PC-9 (cell line): ENCODE measurements at regions of chr22 and their contacts with region 1.

Region 1: GRCh38 chr22:43126480-43127165 is 16.1 kb downstream of the BIK start:
- DNase-seq: peak; percentile 89 to 93
- H3K4me3 ChIP-seq: peak overlapping the region; percentile 10; the same call in 1 of the 2 replicates
- H3K27ac ChIP-seq: peak overlapping the region; percentile 92
- H3K4me1 ChIP-seq: peaks cover 46% of the 10 kb centered on the region
- H3K27me3 ChIP-seq: no peaks in the 10 kb centered on the region
- CTCF ChIP-seq: no peak

Region 2: DNA sequence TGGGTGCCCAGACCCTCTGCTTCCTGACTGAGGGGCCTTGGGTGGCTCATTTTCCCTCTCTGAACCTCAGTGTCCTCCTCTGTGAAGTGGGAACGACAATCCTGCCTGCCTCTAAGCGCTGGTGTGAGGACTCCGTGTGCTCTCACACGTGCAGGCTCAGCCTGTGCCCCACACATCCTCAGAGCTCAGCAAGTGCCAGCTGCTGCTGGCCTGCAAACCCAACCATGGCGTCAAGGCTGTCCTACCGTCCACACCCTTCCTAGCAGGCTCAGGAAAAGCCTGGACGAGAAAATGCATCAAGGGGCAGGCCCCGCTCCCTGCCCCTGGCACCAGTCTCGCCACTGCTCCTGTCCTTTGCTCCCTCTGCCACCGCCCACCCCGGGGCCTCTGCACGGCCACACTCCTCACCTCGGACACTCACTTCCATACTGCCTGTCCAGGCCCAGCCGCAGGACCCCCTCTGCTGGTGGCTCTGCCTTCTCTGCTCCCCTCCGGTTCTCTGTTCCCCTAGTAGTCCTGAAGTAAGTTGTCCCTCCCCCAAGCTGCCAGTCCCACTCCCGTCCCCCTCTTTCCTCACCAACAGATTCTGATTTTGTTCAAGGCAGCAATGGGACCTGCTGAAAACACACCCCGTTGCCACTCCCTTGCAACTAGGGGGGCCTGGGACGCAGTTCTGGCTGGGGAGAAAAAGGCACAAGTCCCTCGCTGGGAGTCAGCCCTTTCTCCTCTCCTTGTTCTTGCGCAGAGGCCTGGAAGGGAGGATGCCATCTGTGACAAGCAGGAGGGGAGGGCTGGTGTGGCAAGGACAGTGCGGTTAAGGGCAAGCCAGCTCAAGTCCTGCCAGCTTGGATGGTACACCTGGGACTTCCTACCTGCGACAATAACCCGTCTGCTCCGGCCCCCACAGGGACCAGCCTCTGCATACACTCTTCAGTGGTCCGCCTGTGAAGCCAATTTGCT is 331.8 kb before region 1 on chr22:
- CTCF ChIA-PET with region 1: no interaction called
- POLR2A ChIA-PET with region 1: no interaction called
- intact Hi-C with region 1: no loop called
- DNase-seq: no peak
- H3K4me3 ChIP-seq: no peak overlapping the region
- H3K27ac ChIP-seq: no peak overlapping the region
- H3K4me1 ChIP-seq: no peaks in the 10 kb centered on the region
- H3K27me3 ChIP-seq: no peaks in the 10 kb centered on the region
- CTCF ChIP-seq: no peak

Region 3: GRCh38 chr22:42889304-42889703 is 237.3 kb before region 1 on chr22:
- CTCF ChIA-PET with region 1: no interaction called
- POLR2A ChIA-PET with region 1: no interaction called
- intact Hi-C with region 1: no loop called
- DNase-seq: no peak
- H3K4me3 ChIP-seq: no peak overlapping the region
- H3K27ac ChIP-seq: no peak overlapping the region
- H3K4me1 ChIP-seq: no peaks in the 10 kb centered on the region
- H3K27me3 ChIP-seq: no peaks in the 10 kb centered on the region
- CTCF ChIP-seq: no peak

Region 4: DNA sequence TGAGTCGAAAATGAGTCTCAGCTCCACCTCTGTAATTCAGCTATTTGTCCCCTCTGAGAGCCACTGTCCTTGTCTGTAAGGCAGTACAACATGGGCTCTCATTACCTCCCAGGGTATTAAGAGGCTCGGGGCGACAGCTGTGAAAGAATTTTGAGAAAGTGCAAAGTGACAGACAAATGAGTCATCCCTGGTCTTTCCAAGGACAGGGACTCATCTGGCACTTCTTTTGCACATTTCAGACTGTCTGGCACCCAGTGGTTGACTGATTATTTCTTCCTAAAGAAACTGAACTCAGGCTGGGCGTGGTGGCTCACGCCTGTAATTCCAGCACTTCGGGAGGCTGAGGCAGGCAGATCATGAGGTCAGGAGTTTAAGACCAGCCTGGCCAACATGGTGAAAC is 207.4 kb before region 1 on chr22:
- CTCF ChIA-PET with region 1: no interaction called
- POLR2A ChIA-PET with region 1: no interaction called
- intact Hi-C with region 1: loop called (anchors 5 kb)
- DNase-seq: peak; percentile 38 to 75
- H3K4me3 ChIP-seq: no peak overlapping the region
- H3K27ac ChIP-seq: peak overlapping the region; percentile 37
- H3K4me1 ChIP-seq: peaks cover 46% of the 10 kb centered on the region
- H3K27me3 ChIP-seq: no peaks in the 10 kb centered on the region
- CTCF ChIP-seq: no peak

Region 5: DNA sequence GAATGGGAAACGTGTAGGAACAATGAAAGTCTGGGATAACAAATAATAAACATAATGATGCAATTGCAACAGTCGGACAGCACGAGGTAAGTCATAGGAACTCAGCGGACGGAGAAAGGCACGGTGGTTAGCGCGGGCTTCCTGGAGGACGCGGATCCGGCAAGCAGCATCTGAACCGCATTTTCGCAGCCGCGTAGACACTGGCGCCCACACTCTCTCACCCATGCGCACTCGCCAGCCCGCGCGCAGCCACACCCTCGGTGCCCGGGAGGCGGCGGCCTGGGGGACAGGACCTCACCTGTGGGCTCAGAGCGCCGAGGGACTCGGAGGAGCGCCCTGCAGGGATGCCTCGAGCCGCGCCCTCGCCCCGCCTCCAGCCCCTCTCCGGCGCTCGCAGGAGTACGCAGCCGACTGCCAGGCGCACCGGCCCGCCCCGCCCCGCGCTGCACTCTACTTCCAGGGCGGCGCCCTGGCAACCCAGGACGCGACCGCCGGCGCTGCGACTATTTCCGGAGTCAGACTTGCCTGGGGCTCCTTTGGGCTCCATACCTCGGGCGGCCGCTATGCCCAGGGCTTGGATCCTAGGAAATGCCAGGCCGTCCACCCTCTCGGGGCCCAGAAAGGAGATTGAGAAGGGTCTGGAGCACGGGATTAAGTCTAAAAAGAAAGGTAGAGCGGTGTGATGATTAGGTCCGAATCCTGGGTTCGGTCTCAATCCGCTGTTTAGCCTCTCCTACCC is 37.5 kb before region 1 on chr22 and contains the start of gene TTLL1:
- CTCF ChIA-PET with region 1: no interaction called
- POLR2A ChIA-PET with region 1: interaction called, 11 read pairs
- intact Hi-C with region 1: loop called (anchors 2 kb)
- DNase-seq: peak; percentile 85 to 96
- H3K4me3 ChIP-seq: peak within 1 kb of the TSS; percentile 93
- H3K27ac ChIP-seq: peak within 1 kb of the TSS; percentile 70
- H3K4me1 ChIP-seq: peaks cover 7% of the 10 kb centered on the region
- H3K27me3 ChIP-seq: no peaks in the 10 kb centered on the region
- CTCF ChIP-seq: no peak; the same call in 1 of the 2 replicates
- total RNA-seq, gene TTLL1: 7.8 and 11.2 TPM in 2 replicates

Region 6: GRCh38 chr22:43099095-43099494 is 27.5 kb before region 1 on chr22:
- CTCF ChIA-PET with region 1: no interaction called
- POLR2A ChIA-PET with region 1: interaction called, 15 read pairs
- intact Hi-C with region 1: loop called (anchors 2 kb)
- DNase-seq: no peak
- H3K4me3 ChIP-seq: no peak overlapping the region
- H3K27ac ChIP-seq: no peak overlapping the region
- H3K4me1 ChIP-seq: peaks cover 28% of the 10 kb centered on the region
- H3K27me3 ChIP-seq: no peaks in the 10 kb centered on the region
- CTCF ChIP-seq: no peak

Region 7: DNA sequence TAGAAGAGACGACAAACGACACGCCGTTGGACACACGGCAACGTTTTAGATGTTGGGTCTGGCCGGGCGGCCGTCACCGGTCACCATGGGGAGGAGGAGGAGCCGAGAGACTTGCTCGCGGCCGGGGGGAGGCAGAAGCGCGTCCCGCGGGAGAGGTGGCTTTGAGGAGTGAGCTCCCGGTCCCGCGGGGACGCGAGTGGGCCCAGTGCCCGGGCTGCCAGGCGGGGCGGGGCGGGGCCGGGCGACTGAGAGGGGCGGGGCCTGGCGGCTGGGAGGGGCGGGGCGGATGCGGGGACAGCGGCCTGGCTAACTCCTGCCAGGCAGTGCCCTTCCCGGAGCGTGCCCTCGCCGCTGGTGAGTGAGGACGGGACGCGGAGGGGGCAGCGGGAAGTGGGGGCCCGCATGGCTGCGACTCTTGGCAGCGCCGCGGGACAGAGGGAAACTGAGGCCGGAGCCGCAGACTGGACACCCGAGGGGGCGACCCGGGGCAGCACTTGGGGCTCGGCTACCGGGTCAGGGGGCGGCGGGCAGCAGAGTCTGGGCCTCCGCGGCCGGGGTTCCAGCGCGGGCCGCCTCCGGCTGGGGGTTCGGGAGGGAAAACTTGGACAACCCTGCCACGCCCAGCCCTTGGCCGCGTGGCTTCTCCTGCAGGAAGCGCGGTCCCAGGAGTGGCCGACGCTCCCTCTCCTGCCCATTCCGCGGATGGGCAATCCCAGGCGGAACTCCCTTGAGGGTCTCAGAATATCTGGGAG is 24.8 kb after region 1 on chr22 and contains the start of gene TSPO:
- CTCF ChIA-PET with region 1: interaction called, 9 read pairs
- POLR2A ChIA-PET with region 1: interaction called, 20 read pairs
- intact Hi-C with region 1: no loop called
- DNase-seq: peak; percentile 34 to 60
- H3K4me3 ChIP-seq: peak within 1 kb of the TSS; percentile 88
- H3K27ac ChIP-seq: peak within 1 kb of the TSS; percentile 45; the same call in 1 of the 2 replicates
- H3K4me1 ChIP-seq: peaks cover 20% of the 10 kb centered on the region
- H3K27me3 ChIP-seq: no peaks in the 10 kb centered on the region
- CTCF ChIP-seq: no peak
- total RNA-seq, gene TSPO: 243 and 308 TPM in 2 replicates

Region 8: GRCh38 chr22:43222262-43222661 is 95.6 kb after region 1 on chr22:
- CTCF ChIA-PET with region 1: no interaction called
- POLR2A ChIA-PET with region 1: interaction called, 19 read pairs
- intact Hi-C with region 1: no loop called
- DNase-seq: peak in 1 of 2 experiments; percentile 34
- H3K4me3 ChIP-seq: no peak overlapping the region
- H3K27ac ChIP-seq: no peak overlapping the region
- H3K4me1 ChIP-seq: no peaks in the 10 kb centered on the region
- H3K27me3 ChIP-seq: peaks cover 31% of the 10 kb centered on the region; the same call in 1 of the 2 replicates
- CTCF ChIP-seq: no peak

Region 9: GRCh38 chr22:44550711-44551491 is 1424.3 kb after region 1 on chr22:
- CTCF ChIA-PET with region 1: no interaction called
- POLR2A ChIA-PET with region 1: interaction called, 13 read pairs
- intact Hi-C with region 1: no loop called
- DNase-seq: peak; percentile 80 to 93
- H3K4me3 ChIP-seq: peak overlapping the region; percentile 51
- H3K27ac ChIP-seq: peak overlapping the region; percentile 95
- H3K4me1 ChIP-seq: peaks cover 30% of the 10 kb centered on the region
- H3K27me3 ChIP-seq: no peaks in the 10 kb centered on the region
- CTCF ChIP-seq: no peak